ENCODE measurements at regions of chr12 and their contacts with region 1.

Region 1: DNA sequence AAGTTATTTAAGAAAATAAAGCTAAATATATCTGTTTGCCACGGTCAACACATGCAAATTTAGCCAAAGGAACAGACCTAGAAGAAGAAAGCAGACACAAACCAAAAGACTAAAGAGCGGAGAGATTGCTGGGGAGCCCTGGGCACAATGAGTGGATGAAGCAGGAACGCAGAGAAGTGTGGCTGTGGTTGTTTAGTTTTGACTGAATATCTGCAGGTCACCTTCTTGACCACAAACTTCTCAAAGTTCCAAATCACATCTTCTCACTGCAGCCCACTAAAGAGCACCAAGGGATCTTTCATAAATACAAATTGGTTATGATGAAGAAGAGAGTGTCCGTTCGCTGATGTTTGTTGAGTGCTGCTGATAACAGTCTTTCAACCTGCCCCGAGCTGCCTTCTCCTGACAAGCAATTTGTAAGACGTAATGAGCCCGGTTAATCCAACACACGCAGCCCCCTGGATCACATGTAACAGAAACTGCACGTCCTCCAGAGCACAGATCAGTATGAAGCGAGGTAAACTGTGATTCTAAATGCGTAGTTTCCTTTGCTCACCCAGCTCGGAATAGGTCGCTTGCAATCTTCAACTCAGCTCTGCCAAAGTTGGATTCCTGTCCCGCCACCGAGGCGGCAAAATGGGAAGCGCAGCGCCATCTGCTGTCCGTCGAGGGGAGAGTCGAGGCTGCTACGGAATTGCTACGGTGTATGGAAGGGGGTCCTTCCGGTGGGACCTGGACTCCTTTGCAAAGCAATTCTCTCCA is 120.8 kb downstream of the GXYLT1 start:
- DNase-seq: peak; percentile 64 to 72
- ATAC-seq: peak; percentile 97 to 99
- H3K4me3 ChIP-seq: peak overlapping the region; percentile 35
- H3K27ac ChIP-seq: peak overlapping the region in 1 of 2 experiments; percentile 65; a peak in 1 of 6 replicates
- H3K4me1 ChIP-seq: no peaks in the 10 kb centered on the region
- CTCF ChIP-seq: peak; percentile 96
- EP300 ChIP-seq: no peak
- POLR2A ChIP-seq: no peak
- RAD21 ChIP-seq: peak; percentile 92 to 95

Region 2: GRCh38 chr12:40946612-40947194 is 1077.2 kb before region 1 on chr12:
- CTCF ChIA-PET with region 1: interaction called, 23 read pairs
- POLR2A ChIA-PET with region 1: no interaction called
- DNase-seq: peak; percentile 18 to 51
- ATAC-seq: no peak
- H3K4me3 ChIP-seq: no peak overlapping the region
- H3K27ac ChIP-seq: no peak overlapping the region
- H3K4me1 ChIP-seq: peaks cover 13% of the 10 kb centered on the region
- CTCF ChIP-seq: peak; percentile 75
- EP300 ChIP-seq: no peak
- POLR2A ChIP-seq: no peak
- RAD21 ChIP-seq: peak; percentile 83 to 92

Region 3: DNA sequence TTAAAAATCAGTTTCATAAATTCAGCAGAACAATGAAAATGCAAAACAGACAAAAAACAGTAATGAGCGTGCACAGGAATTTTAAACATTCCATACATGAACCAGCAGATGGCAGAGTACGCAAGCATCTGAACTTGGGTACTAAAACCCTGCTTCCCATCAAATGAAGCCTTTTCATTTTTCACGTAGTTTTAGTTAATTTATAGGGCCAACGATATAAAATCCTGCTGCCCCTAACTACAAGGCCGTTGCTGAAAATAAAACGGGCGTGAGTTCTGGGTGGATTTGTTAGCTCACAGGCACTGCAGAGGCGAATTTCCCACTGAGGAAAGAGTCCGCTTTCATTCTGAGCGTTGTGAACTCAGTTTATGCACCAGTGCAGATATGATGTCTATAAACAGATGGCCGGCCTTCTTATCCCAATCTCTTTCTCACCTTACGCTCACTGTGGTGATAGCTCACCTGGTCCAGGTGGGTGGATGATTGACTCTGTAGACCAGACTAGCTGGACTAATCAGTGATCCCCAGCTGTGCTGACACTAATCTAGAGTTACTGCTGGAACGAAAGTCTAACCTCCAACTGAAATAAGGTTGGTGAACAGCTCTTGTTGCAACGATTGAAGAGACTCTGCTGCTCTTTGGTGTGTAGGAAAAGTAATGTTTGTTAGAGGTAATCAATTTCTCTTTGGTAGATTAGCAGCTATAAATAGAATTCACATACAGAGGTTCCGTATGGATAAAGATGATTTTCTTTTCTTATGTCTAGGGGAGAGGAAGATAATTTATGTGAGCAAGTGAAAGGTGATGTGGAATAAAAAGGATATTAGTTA is 746.6 kb before region 1 on chr12:
- CTCF ChIA-PET with region 1: interaction called, 36 read pairs
- POLR2A ChIA-PET with region 1: interaction called, 4 read pairs
- DNase-seq: peak; percentile 34 to 55
- ATAC-seq: peak in 1 of 2 experiments; percentile 68; a peak in 3 of 6 replicates
- H3K4me3 ChIP-seq: no peak overlapping the region
- H3K27ac ChIP-seq: no peak overlapping the region
- H3K4me1 ChIP-seq: peaks cover 5% of the 10 kb centered on the region; the same call in 1 of the 3 replicates
- CTCF ChIP-seq: peak; percentile 81
- EP300 ChIP-seq: no peak
- POLR2A ChIP-seq: no peak
- RAD21 ChIP-seq: peak; percentile 83 to 86

Region 4: DNA sequence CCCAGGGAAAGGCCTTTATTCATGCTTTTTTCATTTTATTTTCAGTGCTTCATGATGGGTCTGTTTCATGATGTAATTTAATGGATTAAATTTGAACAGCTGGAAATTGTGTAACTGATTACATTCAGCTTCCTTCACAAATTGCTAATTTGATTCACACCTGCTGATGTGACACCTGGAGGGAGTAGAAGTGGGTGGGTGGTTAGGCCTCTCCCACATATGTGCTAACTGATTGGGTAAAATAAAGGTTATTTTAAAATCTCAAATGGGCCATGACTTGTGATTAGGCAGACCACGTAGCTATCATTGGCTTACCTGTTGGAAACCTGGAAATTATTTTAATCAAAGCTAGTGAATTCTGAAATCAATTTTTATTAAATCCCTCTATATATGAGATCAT is 21.4 kb before region 1 on chr12:
- CTCF ChIA-PET with region 1: interaction called, 10 read pairs
- POLR2A ChIA-PET with region 1: no interaction called
- DNase-seq: no peak
- ATAC-seq: no peak
- H3K4me3 ChIP-seq: no peak overlapping the region
- H3K27ac ChIP-seq: no peak overlapping the region
- H3K4me1 ChIP-seq: no peaks in the 10 kb centered on the region
- CTCF ChIP-seq: no peak
- EP300 ChIP-seq: no peak
- POLR2A ChIP-seq: no peak
- RAD21 ChIP-seq: no peak

Region 5: GRCh38 chr12:42372154-42372791 is 348.4 kb after region 1 on chr12:
- CTCF ChIA-PET with region 1: interaction called, 10 read pairs
- POLR2A ChIA-PET with region 1: no interaction called
- DNase-seq: peak; percentile 34 to 73
- ATAC-seq: peak; percentile 93 to 96
- H3K4me3 ChIP-seq: no peak overlapping the region
- H3K27ac ChIP-seq: no peak overlapping the region
- H3K4me1 ChIP-seq: no peaks in the 10 kb centered on the region
- CTCF ChIP-seq: peak; percentile 76
- EP300 ChIP-seq: no peak
- POLR2A ChIP-seq: no peak
- RAD21 ChIP-seq: peak; percentile 81 to 92

Measured in A549 (cell line).